ENCODE measurements at regions of chr3 and their contacts with region 1.

Region 1: GRCh38 chr3:69306239-69307185 is 79.4 kb downstream of the FRMD4B start:
- H3K4me3 ChIP-seq: no peak overlapping the region
- H3K27ac ChIP-seq: no peak overlapping the region
- H3K4me1 ChIP-seq: no peaks in the 10 kb centered on the region
- CTCF ChIP-seq: peak; percentile 77

Region 2: GRCh38 chr3:69013253-69014021 is 293.1 kb before region 1 on chr3 and contains the start of gene EOGT:
- CTCF ChIA-PET with region 1: no interaction called
- POLR2A ChIA-PET with region 1: no interaction called
- H3K4me3 ChIP-seq: peak within 1 kb of the TSS; percentile 79
- H3K27ac ChIP-seq: peak within 1 kb of the TSS; percentile 76; the same call in 1 of the 2 replicates
- H3K4me1 ChIP-seq: no peaks in the 10 kb centered on the region
- CTCF ChIP-seq: peak; percentile 90

Region 3: DNA sequence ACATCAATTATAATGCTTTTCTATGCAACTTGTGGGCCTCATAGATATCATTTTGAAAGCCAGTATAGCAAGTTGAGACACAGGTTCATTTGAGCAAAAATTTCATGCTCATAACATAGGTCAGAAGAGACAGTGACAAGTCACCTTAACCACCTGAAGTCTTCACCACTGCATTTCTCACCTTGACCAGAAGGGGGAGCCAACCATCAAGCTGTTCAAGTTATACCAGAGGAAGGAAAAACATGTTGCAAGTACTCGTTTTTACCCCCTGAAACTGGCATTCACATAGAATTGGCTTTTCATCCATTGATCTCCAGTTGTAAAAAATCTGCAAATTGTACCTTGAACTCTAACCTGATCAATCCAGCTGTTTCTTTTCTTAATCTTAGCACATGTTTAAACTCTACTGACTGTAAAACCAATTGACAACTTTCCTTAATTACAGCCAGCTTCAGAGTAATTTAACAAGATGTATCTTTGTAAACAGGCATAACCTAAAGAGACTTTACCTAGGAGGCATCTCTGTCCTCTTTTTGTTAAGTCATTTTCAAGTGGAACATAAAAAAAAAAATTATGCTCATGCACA is 185.5 kb before region 1 on chr3:
- CTCF ChIA-PET with region 1: interaction called, 42 read pairs
- POLR2A ChIA-PET with region 1: no interaction called
- H3K4me3 ChIP-seq: no peak overlapping the region
- H3K27ac ChIP-seq: no peak overlapping the region
- H3K4me1 ChIP-seq: no peaks in the 10 kb centered on the region
- CTCF ChIP-seq: peak; percentile 58; the same call in 1 of the 2 replicates

Region 4: DNA sequence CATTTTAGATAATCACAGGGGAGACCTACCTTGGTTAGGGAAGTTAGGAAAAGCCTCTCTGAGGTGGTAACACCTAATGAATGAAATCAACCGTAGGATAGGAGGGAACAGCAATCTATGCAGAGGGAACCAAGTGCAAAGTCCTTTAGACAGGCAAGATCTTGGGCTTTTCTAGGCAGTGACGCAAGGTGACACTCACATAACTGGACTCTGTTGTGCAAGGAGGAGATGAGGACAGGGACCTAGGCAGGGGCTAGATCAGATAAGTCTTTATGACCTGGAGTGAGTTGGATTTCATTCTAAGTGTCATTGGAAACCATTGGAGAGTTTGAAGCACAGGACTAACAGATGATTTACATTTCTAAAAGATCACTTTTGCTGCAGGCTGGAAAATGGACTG is 179.5 kb before region 1 on chr3:
- CTCF ChIA-PET with region 1: interaction called, 12 read pairs
- POLR2A ChIA-PET with region 1: no interaction called
- H3K4me3 ChIP-seq: no peak overlapping the region
- H3K27ac ChIP-seq: no peak overlapping the region
- H3K4me1 ChIP-seq: no peaks in the 10 kb centered on the region
- CTCF ChIP-seq: no peak

Region 5: GRCh38 chr3:69294014-69294775 is 12.3 kb before region 1 on chr3:
- CTCF ChIA-PET with region 1: interaction called, 16 read pairs
- POLR2A ChIA-PET with region 1: no interaction called
- H3K4me3 ChIP-seq: no peak overlapping the region
- H3K27ac ChIP-seq: no peak overlapping the region
- H3K4me1 ChIP-seq: peaks cover 3% of the 10 kb centered on the region; the same call in 1 of the 2 replicates
- CTCF ChIP-seq: no peak

Region 6: DNA sequence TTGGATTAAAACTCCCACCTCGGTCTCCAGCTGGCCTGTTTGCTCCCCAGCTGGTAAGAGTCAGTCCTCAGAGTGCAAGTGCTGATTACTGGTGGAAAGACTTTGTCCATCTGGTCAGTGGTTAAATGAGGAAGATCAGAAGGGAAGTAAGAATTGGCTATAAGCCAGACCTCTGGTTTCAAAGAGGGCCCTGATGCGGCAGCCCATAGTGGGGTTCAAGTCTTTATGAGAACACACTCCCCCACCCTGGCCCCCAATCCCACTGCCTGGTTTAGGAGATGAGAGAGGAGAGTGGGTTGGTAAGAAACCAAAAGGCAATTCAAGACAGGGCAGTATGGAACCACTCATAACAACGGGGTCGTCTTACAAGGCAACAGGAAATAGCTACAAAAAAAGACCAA is 14.4 kb after region 1 on chr3:
- CTCF ChIA-PET with region 1: interaction called, 21 read pairs
- POLR2A ChIA-PET with region 1: no interaction called
- H3K4me3 ChIP-seq: no peak overlapping the region
- H3K27ac ChIP-seq: no peak overlapping the region
- H3K4me1 ChIP-seq: no peaks in the 10 kb centered on the region
- CTCF ChIP-seq: no peak

Region 7: DNA sequence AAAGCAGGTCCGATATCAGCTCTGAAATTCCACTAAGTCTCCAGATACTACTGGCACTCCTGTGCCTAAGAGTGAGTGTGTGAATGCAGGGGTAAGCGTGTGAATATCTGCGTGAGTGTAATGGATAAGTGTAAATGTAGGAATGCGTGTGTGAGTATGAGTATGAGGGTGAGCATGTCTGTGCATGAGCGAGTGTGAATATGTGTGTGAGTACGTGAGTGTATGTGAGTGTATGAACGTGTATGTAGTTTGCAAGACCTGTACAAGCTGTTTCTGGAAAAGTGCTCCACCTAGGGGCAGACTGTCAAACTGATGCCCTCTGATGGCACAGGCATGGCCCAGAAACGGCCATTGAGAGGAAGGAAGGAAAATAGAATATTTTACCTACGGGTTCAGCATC is 103.7 kb after region 1 on chr3:
- CTCF ChIA-PET with region 1: interaction called, 13 read pairs
- POLR2A ChIA-PET with region 1: no interaction called
- H3K4me3 ChIP-seq: no peak overlapping the region
- H3K27ac ChIP-seq: no peak overlapping the region
- H3K4me1 ChIP-seq: no peaks in the 10 kb centered on the region
- CTCF ChIP-seq: peak; percentile 55

Region 8: DNA sequence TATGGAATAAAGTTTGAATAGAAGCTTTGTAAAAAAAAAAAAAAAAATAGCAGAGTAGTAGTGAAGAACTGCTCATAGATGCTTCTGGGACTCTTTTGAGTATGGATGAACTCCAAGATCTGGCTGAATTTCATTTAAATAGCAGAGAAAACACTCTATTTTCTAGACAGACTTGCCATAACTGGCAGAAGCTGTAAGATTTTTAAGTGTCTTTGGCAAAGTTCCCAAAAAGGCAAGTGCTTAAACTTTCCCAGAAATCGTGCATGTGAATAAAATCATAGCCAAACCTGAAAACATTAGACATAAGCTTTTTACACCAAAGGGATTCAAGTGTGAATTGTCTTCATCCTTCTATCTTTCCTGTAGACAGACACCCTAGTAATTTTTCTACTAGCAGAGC is 322.4 kb after region 1 on chr3:
- CTCF ChIA-PET with region 1: no interaction called
- POLR2A ChIA-PET with region 1: no interaction called
- H3K4me3 ChIP-seq: no peak overlapping the region
- H3K27ac ChIP-seq: no peak overlapping the region
- H3K4me1 ChIP-seq: no peaks in the 10 kb centered on the region
- CTCF ChIP-seq: no peak

Measured in HEK293 (cell line).